Activated CD8-positive, alpha-beta T cell treated with anti-CD3 and anti-CD28 coated beads for 36 hours (primary cell): ENCODE measurements at regions of chr10 and their contacts with region 1.

Region 1: GRCh38 chr10:28179006-28179742 is 123.7 kb downstream of the MPP7 start:
- DNase-seq: peak; percentile 59
- ATAC-seq: peak; percentile 43
- H3K4me3 Mint-ChIP-seq: peak overlapping the region; percentile 70
- H3K27ac Mint-ChIP-seq: peak overlapping the region; percentile 91
- H3K4me1 Mint-ChIP-seq: peaks cover 37% of the 10 kb centered on the region
- H3K27me3 Mint-ChIP-seq: no peaks in the 10 kb centered on the region
- CTCF ChIP-seq: peak; percentile 78

Region 2: GRCh38 chr10:27564398-27564797 is 614.8 kb before region 1 on chr10:
- CTCF ChIA-PET with region 1: no interaction called
- POLR2A ChIA-PET with region 1: no interaction called
- intact Hi-C with region 1: loop called (anchors 5 kb)
- DNase-seq: peak; percentile 10
- ATAC-seq: peak; percentile 68
- H3K4me3 Mint-ChIP-seq: peak overlapping the region; percentile 23
- H3K27ac Mint-ChIP-seq: peak overlapping the region; percentile 70
- H3K4me1 Mint-ChIP-seq: peaks cover 28% of the 10 kb centered on the region
- H3K27me3 Mint-ChIP-seq: no peaks in the 10 kb centered on the region
- CTCF ChIP-seq: no peak

Region 3: GRCh38 chr10:27742195-27743011 is 436.8 kb before region 1 on chr10:
- CTCF ChIA-PET with region 1: interaction called, 9 read pairs
- POLR2A ChIA-PET with region 1: interaction called, 6 read pairs
- intact Hi-C with region 1: loop called (anchors 5 kb)
- DNase-seq: peak; percentile 90
- ATAC-seq: peak; percentile 86
- H3K4me3 Mint-ChIP-seq: peak overlapping the region; percentile 78
- H3K27ac Mint-ChIP-seq: peak overlapping the region; percentile 71
- H3K4me1 Mint-ChIP-seq: peaks cover 36% of the 10 kb centered on the region
- H3K27me3 Mint-ChIP-seq: peaks cover 59% of the 10 kb centered on the region
- CTCF ChIP-seq: peak; percentile 86

Region 4: GRCh38 chr10:27783660-27784059 is 395.5 kb before region 1 on chr10:
- CTCF ChIA-PET with region 1: interaction called, 18 read pairs
- POLR2A ChIA-PET with region 1: no interaction called
- intact Hi-C with region 1: no loop called
- DNase-seq: peak; percentile 71
- ATAC-seq: peak; percentile 95
- H3K4me3 Mint-ChIP-seq: no peak overlapping the region
- H3K27ac Mint-ChIP-seq: no peak overlapping the region
- H3K4me1 Mint-ChIP-seq: no peaks in the 10 kb centered on the region
- H3K27me3 Mint-ChIP-seq: peaks cover 16% of the 10 kb centered on the region
- CTCF ChIP-seq: peak; percentile 46

Region 5: DNA sequence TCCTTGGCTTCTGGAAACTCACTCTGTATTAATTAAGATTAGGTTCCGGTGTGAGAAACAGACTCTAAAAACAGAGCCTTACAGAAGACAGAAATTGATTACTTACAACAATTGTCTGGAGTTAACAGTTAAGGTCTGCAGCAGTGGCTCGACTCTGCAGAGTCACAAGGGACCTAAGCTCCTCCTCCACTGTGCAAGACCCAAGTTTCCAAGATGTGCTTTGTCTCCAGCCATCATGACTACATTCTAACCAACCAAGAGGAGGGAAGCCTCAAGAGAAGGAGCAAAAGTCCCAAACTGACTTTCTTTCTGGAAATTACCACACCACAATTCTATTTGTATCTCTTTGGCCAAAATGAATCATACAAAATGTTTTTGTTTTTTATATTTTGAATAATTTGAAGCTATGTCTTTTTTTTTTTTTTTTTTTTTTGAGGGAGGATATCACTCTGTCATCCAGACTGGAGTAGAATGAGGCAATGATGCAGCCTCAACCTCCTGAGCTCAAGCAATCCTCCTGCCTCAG is 166.1 kb before region 1 on chr10:
- CTCF ChIA-PET with region 1: no interaction called
- POLR2A ChIA-PET with region 1: no interaction called
- intact Hi-C with region 1: loop called (anchors 5 kb)
- DNase-seq: no peak
- ATAC-seq: peak; percentile 70
- H3K4me3 Mint-ChIP-seq: no peak overlapping the region
- H3K27ac Mint-ChIP-seq: no peak overlapping the region
- H3K4me1 Mint-ChIP-seq: peaks cover 10% of the 10 kb centered on the region
- H3K27me3 Mint-ChIP-seq: peaks cover 27% of the 10 kb centered on the region
- CTCF ChIP-seq: no peak

Region 6: DNA sequence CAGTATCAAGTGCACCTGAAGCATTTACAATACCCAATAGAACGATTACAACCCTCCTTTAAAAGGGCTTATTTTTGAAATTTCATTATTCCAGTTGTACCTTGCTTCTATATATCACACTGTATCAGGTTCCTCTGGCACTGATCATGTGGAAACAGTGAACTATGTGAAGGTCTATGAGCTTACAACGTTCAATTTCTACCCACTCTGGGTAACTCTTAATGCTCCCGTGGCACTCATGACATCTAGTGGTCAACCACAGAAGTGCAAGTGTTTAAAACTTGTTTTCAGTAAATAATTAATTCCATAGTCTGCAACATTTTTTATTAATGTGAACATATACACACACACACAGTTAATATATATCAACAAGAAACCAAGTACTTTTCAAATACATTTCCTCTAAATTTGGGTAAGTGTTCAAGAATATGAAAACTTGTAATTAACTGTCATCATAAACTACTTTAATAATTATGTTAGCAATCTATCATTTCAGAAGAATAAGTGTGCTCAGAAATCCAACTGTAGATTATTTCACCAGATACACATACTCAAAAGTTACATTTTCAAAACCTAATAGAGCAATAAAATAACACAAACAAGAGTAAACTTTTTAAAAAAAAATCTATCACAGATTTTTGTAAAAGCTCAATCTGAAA is 62.7 kb after region 1 on chr10:
- CTCF ChIA-PET with region 1: interaction called, 18 read pairs
- POLR2A ChIA-PET with region 1: no interaction called
- intact Hi-C with region 1: no loop called
- DNase-seq: peak; percentile 65
- ATAC-seq: peak; percentile 83
- H3K4me3 Mint-ChIP-seq: no peak overlapping the region
- H3K27ac Mint-ChIP-seq: no peak overlapping the region
- H3K4me1 Mint-ChIP-seq: peaks cover 27% of the 10 kb centered on the region
- H3K27me3 Mint-ChIP-seq: no peaks in the 10 kb centered on the region
- CTCF ChIP-seq: peak; percentile 93